ENCODE measurements at regions of chr22 and their contacts with region 1.

Region 1: GRCh38 chr22:37566903-37567820 is 6.9 kb downstream of the CDC42EP1 start:
- DNase-seq: peak; percentile 84
- ATAC-seq: peak; percentile 96
- H3K4me3 ChIP-seq: no peak overlapping the region
- H3K27ac ChIP-seq: no peak overlapping the region
- H3K4me1 ChIP-seq: peaks cover 11% of the 10 kb centered on the region
- H3K27me3 ChIP-seq: peaks cover 0 to 1% of the 10 kb centered on the region in 2 experiments; a peak in 2 of 4 replicates
- CTCF ChIP-seq: peak; percentile 95 to 97 (median 95)
- EP300 ChIP-seq: no peak; a peak in 1 of 4 replicates
- POLR2A ChIP-seq: no peak
- RAD21 ChIP-seq: peak; percentile 88

Region 2: DNA sequence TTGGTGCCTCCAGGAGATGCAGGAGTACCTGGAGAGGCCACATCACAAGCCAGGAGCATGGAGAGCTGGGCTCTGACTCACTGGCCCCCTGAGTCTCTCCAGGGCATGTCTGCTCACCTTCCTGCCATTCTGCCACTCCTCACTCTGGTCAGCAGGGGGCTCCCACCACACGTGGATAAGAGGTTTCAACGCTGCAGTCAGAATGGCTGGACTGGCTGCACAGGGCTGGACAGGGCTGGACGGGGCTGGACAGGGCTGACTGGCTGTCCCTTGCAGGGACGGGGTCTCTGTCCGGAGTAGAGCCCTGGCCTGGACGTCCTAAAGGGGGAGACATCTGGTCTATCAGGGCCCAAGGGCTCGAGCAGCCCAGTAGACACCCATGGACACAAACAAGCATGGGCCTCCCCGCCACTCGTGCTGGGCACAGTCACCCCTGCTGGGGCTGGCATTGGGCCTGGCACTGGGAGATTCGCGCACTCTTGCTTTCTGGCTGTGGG is 250.2 kb before region 1 on chr22:
- CTCF ChIA-PET with region 1: interaction called, 32 read pairs
- POLR2A ChIA-PET with region 1: no interaction called
- RAD21 ChIA-PET with region 1: interaction called, 6 read pairs
- SMC1A ChIA-PET with region 1: interaction called, 7 read pairs
- in situ Hi-C with region 1: no loop called
- intact Hi-C with region 1: loop called (anchors 10 kb)
- DNase-seq: no peak
- ATAC-seq: peak; percentile 83
- H3K4me3 ChIP-seq: no peak overlapping the region
- H3K27ac ChIP-seq: no peak overlapping the region
- H3K4me1 ChIP-seq: peaks cover 21% of the 10 kb centered on the region
- H3K27me3 ChIP-seq: peaks cover 0 to 1% of the 10 kb centered on the region in 2 experiments; a peak in 1 of 4 replicates
- CTCF ChIP-seq: peak; percentile 91 to 97 (median 96); a peak in 5 of 6 replicates
- EP300 ChIP-seq: no peak
- POLR2A ChIP-seq: no peak
- RAD21 ChIP-seq: peak; percentile 99

Region 3: GRCh38 chr22:37472418-37473006 is 94.7 kb before region 1 on chr22:
- CTCF ChIA-PET with region 1: interaction called, 38 read pairs
- POLR2A ChIA-PET with region 1: no interaction called
- RAD21 ChIA-PET with region 1: interaction called, 22 read pairs
- SMC1A ChIA-PET with region 1: interaction called, 15 read pairs
- in situ Hi-C with region 1: no loop called
- intact Hi-C with region 1: no loop called
- DNase-seq: no peak
- ATAC-seq: peak; percentile 74
- H3K4me3 ChIP-seq: no peak overlapping the region
- H3K27ac ChIP-seq: no peak overlapping the region
- H3K4me1 ChIP-seq: no peaks in the 10 kb centered on the region
- H3K27me3 ChIP-seq: no peaks in the 10 kb centered on the region
- CTCF ChIP-seq: peak; percentile 52 to 76 (median 60)
- EP300 ChIP-seq: no peak
- POLR2A ChIP-seq: no peak
- RAD21 ChIP-seq: 0 out of 2 replicates have a peak, but pooled peaks have one; percentile 23

Region 4: DNA sequence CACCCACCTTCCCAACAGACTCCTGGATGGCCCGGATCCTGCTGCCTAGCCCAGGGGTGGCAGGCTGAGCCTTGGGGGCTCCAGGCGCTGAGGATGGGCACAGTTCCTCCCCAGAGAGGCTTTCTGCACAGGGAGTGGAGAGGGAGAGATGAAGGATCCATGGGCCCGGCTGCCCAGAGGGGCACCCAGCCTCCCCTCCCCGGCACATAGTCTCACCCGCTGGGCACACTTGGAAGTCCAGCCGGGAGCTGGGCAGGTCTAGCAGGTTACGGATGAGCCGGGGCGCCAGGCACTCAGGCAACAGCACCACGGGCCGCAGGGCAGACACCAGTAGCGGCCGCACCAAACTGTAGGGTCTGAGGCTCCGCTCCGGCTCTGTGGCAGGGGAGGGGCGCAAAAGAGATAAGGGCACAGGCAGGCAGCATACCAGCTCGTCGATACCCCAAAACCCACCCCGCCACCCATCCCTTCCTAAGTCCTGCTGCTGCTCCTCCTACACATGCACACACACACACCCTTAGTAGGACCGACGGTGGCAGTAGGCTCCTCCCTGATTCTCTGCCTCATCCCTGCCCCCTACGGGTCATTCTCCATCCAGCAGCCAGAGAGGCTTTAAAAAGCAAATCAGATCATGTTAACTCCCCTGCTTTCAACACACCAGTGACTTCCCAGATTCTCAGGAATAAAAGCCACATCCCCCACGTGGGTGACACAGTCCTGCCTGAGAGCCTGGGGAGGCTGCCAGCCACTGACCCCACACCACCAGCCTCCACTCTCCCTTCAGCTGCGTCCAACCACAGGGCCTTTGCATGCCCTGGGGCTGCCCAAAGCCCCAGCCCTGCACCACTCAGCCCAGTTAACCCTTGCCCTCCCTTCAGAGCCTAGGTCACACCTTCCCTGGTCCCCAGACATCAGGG is 74.5 kb before region 1 on chr22:
- CTCF ChIA-PET with region 1: interaction called, 12 read pairs
- POLR2A ChIA-PET with region 1: no interaction called
- RAD21 ChIA-PET with region 1: no interaction called
- SMC1A ChIA-PET with region 1: no interaction called
- in situ Hi-C with region 1: no loop called
- intact Hi-C with region 1: no loop called
- DNase-seq: no peak
- ATAC-seq: peak; percentile 92
- H3K4me3 ChIP-seq: no peak overlapping the region
- H3K27ac ChIP-seq: no peak overlapping the region
- H3K4me1 ChIP-seq: no peaks in the 10 kb centered on the region
- H3K27me3 ChIP-seq: no peaks in the 10 kb centered on the region; a peak in 1 of 4 replicates
- CTCF ChIP-seq: peak; percentile 57 to 67 (median 63)
- EP300 ChIP-seq: no peak
- POLR2A ChIP-seq: no peak
- RAD21 ChIP-seq: peak; percentile 30; the same call in 1 of the 2 replicates

Region 5: DNA sequence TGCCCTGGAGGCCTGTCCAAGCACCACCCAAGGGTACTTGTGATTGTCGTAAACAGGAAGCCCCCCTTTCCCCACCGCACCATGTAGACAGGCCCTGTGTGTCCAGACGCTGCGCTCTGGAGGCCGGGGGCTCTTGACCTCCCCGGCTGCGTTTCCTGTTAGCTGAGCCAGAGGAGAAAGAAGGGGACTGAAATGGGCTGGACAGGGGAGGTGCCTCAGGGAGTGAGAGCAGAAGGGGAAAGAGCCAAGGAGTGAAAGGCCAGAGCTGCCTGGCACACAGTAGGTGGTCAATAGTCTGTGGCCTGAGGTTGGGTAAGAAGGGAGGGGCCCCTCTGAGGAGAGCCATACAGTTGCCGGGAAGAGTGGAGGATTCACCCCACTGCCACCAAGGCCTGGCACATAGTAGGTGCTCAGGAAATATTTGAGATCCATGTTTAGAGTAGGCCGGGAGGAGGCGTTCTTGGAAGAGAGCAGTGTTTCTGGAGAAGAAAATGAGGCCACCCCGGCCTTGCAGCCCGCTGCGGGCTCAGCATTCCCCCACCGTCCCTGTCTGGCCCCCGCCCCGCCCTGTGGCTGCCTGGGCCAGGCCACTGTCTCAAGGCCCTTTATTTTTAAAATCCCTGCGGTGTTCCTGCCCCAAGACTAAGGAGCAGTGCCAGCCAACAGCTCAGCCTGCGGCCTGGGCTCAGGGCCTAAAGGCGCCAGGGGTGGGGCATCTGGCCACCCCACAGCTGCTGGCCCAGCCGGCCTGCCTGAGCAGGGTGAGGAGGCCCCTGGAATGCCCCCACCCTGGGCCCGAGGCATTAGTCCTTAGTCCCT is 20.5 kb before region 1 on chr22:
- CTCF ChIA-PET with region 1: interaction called, 541 read pairs
- POLR2A ChIA-PET with region 1: interaction called, 39 read pairs
- RAD21 ChIA-PET with region 1: interaction called, 237 read pairs
- SMC1A ChIA-PET with region 1: interaction called, 179 read pairs
- in situ Hi-C with region 1: no loop called
- intact Hi-C with region 1: no loop called
- DNase-seq: no peak
- ATAC-seq: no peak
- H3K4me3 ChIP-seq: no peak overlapping the region
- H3K27ac ChIP-seq: no peak overlapping the region
- H3K4me1 ChIP-seq: peaks cover 8% of the 10 kb centered on the region
- H3K27me3 ChIP-seq: peaks cover 0 to 2% of the 10 kb centered on the region in 2 experiments; a peak in 1 of 4 replicates
- CTCF ChIP-seq: no peak
- EP300 ChIP-seq: no peak
- POLR2A ChIP-seq: no peak
- RAD21 ChIP-seq: no peak

Region 6: DNA sequence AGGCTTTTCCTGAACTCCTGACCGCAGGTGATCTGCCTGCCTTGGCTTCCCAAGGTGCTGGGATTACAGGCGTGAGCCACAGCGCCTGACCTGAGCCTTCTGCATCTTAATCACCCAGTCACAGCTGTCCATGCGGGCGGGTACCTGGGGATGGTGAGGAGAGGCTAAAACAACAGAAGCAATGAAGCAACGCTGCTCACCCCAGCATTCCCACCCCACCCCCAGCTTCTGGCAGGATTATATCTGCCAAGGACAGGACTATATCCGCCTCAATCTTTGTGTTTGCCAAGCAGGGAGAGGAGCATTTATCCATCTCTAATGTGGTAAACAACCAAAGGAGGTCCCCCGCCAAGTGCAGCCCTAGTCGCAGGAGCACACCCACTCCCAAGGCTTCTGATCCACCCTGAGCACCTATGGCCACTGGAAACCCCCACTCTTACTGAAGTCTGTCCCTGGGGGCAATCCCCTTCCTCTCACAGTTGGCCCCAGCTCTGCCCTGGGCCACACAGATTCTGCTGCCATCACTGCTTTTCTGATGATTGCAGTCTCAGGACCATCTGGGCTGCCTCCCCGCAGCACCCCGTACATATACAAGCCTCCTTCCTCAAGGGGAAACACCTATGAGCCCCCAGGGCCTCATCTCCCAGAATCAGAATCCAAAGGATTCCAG is 21.5 kb after region 1 on chr22:
- CTCF ChIA-PET with region 1: interaction called, 528 read pairs
- POLR2A ChIA-PET with region 1: interaction called, 21 read pairs
- RAD21 ChIA-PET with region 1: interaction called, 154 read pairs
- SMC1A ChIA-PET with region 1: interaction called, 117 read pairs
- in situ Hi-C with region 1: no loop called
- intact Hi-C with region 1: loop called (anchors 1 kb)
- DNase-seq: no peak
- ATAC-seq: peak; percentile 56
- H3K4me3 ChIP-seq: no peak overlapping the region
- H3K27ac ChIP-seq: no peak overlapping the region
- H3K4me1 ChIP-seq: peaks cover 31% of the 10 kb centered on the region
- H3K27me3 ChIP-seq: no peaks in the 10 kb centered on the region
- CTCF ChIP-seq: no peak
- EP300 ChIP-seq: no peak
- POLR2A ChIP-seq: no peak
- RAD21 ChIP-seq: no peak

Region 7: GRCh38 chr22:37608477-37609239 is 41.5 kb after region 1 on chr22 and contains the start of gene GGA1:
- CTCF ChIA-PET with region 1: interaction called, 28 read pairs
- POLR2A ChIA-PET with region 1: interaction called, 8 read pairs
- RAD21 ChIA-PET with region 1: interaction called, 22 read pairs
- SMC1A ChIA-PET with region 1: interaction called, 11 read pairs
- in situ Hi-C with region 1: no loop called
- intact Hi-C with region 1: no loop called
- DNase-seq: no peak
- ATAC-seq: peak; percentile 83
- H3K4me3 ChIP-seq: peak within 1 kb of the TSS; percentile 97
- H3K27ac ChIP-seq: peak within 1 kb of the TSS; percentile 87
- H3K4me1 ChIP-seq: peaks cover 17% of the 10 kb centered on the region
- H3K27me3 ChIP-seq: no peaks in the 10 kb centered on the region
- CTCF ChIP-seq: no peak
- EP300 ChIP-seq: peak in 1 of 2 experiments; percentile 44; a peak in 2 of 4 replicates
- POLR2A ChIP-seq: peak; percentile 77
- RAD21 ChIP-seq: no peak
- polyA plus RNA-seq, gene GGA1: 1.4 to 4.8 TPM

Measured in GM12878 (cell line).